ENCODE measurements at regions of chr3 and their contacts with region 1.

Region 1: GRCh38 chr3:71397046-71397445 is 186.5 kb downstream of the FOXP1 start:
- DNase-seq: peak; percentile 54
- H3K4me3 ChIP-seq: no peak overlapping the region
- H3K27ac ChIP-seq: no peak overlapping the region
- H3K4me1 ChIP-seq: peaks cover 19% of the 10 kb centered on the region
- H3K27me3 ChIP-seq: no peaks in the 10 kb centered on the region
- CTCF ChIP-seq: peak; percentile 39 to 40
- POLR2A ChIP-seq: no peak

Region 2: GRCh38 chr3:70539908-70540307 is 857.1 kb before region 1 on chr3:
- CTCF ChIA-PET with region 1: no interaction called
- POLR2A ChIA-PET with region 1: no interaction called
- dilution Hi-C with region 1: no loop called
- intact Hi-C with region 1: loop called (anchors 10 kb)
- DNase-seq: no peak
- H3K4me3 ChIP-seq: no peak overlapping the region
- H3K27ac ChIP-seq: no peak overlapping the region
- H3K4me1 ChIP-seq: no peaks in the 10 kb centered on the region
- H3K27me3 ChIP-seq: peaks cover 11% of the 10 kb centered on the region in 2 experiments
- CTCF ChIP-seq: peak; percentile 13 to 15
- POLR2A ChIP-seq: no peak

Region 3: GRCh38 chr3:71103430-71103921 is 293.6 kb before region 1 on chr3:
- CTCF ChIA-PET with region 1: no interaction called
- POLR2A ChIA-PET with region 1: no interaction called
- dilution Hi-C with region 1: no loop called
- intact Hi-C with region 1: loop called (anchors 10 kb)
- DNase-seq: peak; percentile 94
- H3K4me3 ChIP-seq: no peak overlapping the region
- H3K27ac ChIP-seq: peak overlapping the region; percentile 92
- H3K4me1 ChIP-seq: peaks cover 65% of the 10 kb centered on the region
- H3K27me3 ChIP-seq: no peaks in the 10 kb centered on the region
- CTCF ChIP-seq: no peak
- POLR2A ChIP-seq: no peak

Region 4: GRCh38 chr3:71247221-71247976 is 149.6 kb before region 1 on chr3:
- CTCF ChIA-PET with region 1: interaction called, 11 read pairs
- POLR2A ChIA-PET with region 1: no interaction called
- dilution Hi-C with region 1: no loop called
- intact Hi-C with region 1: no loop called
- DNase-seq: no peak
- H3K4me3 ChIP-seq: no peak overlapping the region
- H3K27ac ChIP-seq: no peak overlapping the region
- H3K4me1 ChIP-seq: peaks cover 34% of the 10 kb centered on the region
- H3K27me3 ChIP-seq: no peaks in the 10 kb centered on the region
- CTCF ChIP-seq: no peak
- POLR2A ChIP-seq: no peak

Region 5: GRCh38 chr3:71332813-71333212 is 64.2 kb before region 1 on chr3:
- CTCF ChIA-PET with region 1: interaction called, 10 read pairs
- POLR2A ChIA-PET with region 1: no interaction called
- dilution Hi-C with region 1: no loop called
- intact Hi-C with region 1: no loop called
- DNase-seq: no peak
- H3K4me3 ChIP-seq: no peak overlapping the region
- H3K27ac ChIP-seq: no peak overlapping the region
- H3K4me1 ChIP-seq: no peaks in the 10 kb centered on the region
- H3K27me3 ChIP-seq: no peaks in the 10 kb centered on the region
- CTCF ChIP-seq: no peak
- POLR2A ChIP-seq: no peak

Region 6: DNA sequence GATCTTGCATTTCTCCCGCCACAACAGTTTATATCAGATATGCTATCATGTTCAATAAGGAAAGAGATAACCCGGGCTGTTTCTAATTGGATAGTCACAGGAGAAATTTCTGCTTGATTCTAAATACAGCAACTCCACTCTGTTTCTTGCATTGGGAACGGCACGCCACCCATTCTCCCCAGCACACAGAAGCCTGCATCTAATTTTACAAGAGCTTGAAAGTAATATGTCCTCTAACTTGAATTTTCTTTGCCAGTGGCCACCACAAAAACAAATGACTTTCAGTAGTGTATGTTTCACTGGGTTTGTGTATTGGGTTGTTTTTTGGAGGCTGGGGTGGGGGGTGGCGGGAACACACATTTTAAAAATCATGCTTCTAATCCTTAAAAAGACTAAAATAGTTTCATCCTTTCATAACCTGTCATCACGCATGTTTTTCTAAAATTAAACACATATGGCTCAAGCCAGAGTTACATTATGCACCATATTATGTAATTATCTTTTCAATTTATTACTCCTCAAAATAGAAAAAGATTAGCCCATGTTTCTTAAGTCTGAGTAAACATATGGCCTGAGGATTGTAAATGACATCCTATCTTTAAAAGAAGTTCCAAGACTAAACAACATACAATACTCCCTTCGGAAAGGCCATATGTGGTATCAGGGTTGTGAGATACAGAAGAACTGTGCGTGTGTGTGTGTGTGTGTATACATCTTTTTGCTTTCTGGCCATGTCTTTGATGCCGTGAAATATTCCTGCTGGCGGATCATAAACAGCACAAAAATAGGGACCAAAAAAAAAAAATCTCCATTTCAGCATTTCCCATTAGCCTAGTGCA is 10.1 kb after region 1 on chr3:
- CTCF ChIA-PET with region 1: interaction called, 19 read pairs
- POLR2A ChIA-PET with region 1: no interaction called
- dilution Hi-C with region 1: no loop called
- intact Hi-C with region 1: no loop called
- DNase-seq: no peak
- H3K4me3 ChIP-seq: no peak overlapping the region
- H3K27ac ChIP-seq: no peak overlapping the region
- H3K4me1 ChIP-seq: no peaks in the 10 kb centered on the region
- H3K27me3 ChIP-seq: no peaks in the 10 kb centered on the region
- CTCF ChIP-seq: no peak
- POLR2A ChIP-seq: no peak

Measured in endothelial cell of umbilical vein (primary cell).